ENCODE measurements at regions of chr20 and their contacts with region 1.

Region 1: GRCh38 chr20:55172310-55172995 is 697.1 kb downstream of the DOK5 start:
- DNase-seq: no peak
- ATAC-seq: no peak
- H3K4me3 ChIP-seq: no peak overlapping the region
- H3K4me3 Mint-ChIP-seq: no peak overlapping the region
- H3K27ac ChIP-seq: no peak overlapping the region
- H3K27ac Mint-ChIP-seq: no peak overlapping the region
- H3K4me1 ChIP-seq: no peaks in the 10 kb centered on the region
- H3K4me1 Mint-ChIP-seq: no peaks in the 10 kb centered on the region
- H3K27me3 ChIP-seq: no peaks in the 10 kb centered on the region
- H3K27me3 Mint-ChIP-seq: no peaks in the 10 kb centered on the region

Region 2: GRCh38 chr20:56773749-56774148 is 1601.3 kb after region 1 on chr20:
- CTCF ChIA-PET with region 1: interaction called in 1 of 2 experiments, 12 read pairs
- POLR2A ChIA-PET with region 1: no interaction called
- DNase-seq: no peak
- ATAC-seq: no peak
- H3K4me3 ChIP-seq: no peak overlapping the region
- H3K4me3 Mint-ChIP-seq: no peak overlapping the region
- H3K27ac ChIP-seq: no peak overlapping the region
- H3K27ac Mint-ChIP-seq: no peak overlapping the region
- H3K4me1 ChIP-seq: peaks cover 2 to 6% of the 10 kb centered on the region in 2 experiments
- H3K4me1 Mint-ChIP-seq: peaks cover 0 to 4% (median under 1%) of the 10 kb centered on the region in 3 donors
- H3K27me3 ChIP-seq: no peaks in the 10 kb centered on the region
- H3K27me3 Mint-ChIP-seq: peaks cover 0 to 8% of the 10 kb centered on the region in 2 donors